Activated CD4-positive, alpha-beta memory T cell treated with anti-CD3 and anti-CD28 coated beads, Interleukin-2, amount 10 ng/mL, durations not matched to agents 7 days and 5 days (primary cell): ENCODE measurements at regions of chr2 and their contacts with region 1.

Region 1: GRCh38 chr2:231713730-231714430 is 5.6 kb downstream of the PTMA start:
- DNase-seq: peak; percentile 90
- H3K4me3 Mint-ChIP-seq: peak overlapping the region; percentile 17
- H3K27ac Mint-ChIP-seq: peak overlapping the region; percentile 94
- H3K4me1 Mint-ChIP-seq: peaks cover 28% of the 10 kb centered on the region
- H3K27me3 Mint-ChIP-seq: no peaks in the 10 kb centered on the region

Region 2: GRCh38 chr2:231198291-231199173 is 515.3 kb before region 1 on chr2 and contains the start of gene ARMC9:
- CTCF ChIA-PET with region 1: no interaction called
- POLR2A ChIA-PET with region 1: no interaction called
- DNase-seq: peak; percentile 78
- H3K4me3 Mint-ChIP-seq: peak within 1 kb of the TSS; percentile 88
- H3K27ac Mint-ChIP-seq: peak within 1 kb of the TSS; percentile 16
- H3K4me1 Mint-ChIP-seq: peaks cover 12% of the 10 kb centered on the region
- H3K27me3 Mint-ChIP-seq: peaks cover 30% of the 10 kb centered on the region
- total RNA-seq, gene ARMC9: 0.50 to 0.55 TPM

Region 3: DNA sequence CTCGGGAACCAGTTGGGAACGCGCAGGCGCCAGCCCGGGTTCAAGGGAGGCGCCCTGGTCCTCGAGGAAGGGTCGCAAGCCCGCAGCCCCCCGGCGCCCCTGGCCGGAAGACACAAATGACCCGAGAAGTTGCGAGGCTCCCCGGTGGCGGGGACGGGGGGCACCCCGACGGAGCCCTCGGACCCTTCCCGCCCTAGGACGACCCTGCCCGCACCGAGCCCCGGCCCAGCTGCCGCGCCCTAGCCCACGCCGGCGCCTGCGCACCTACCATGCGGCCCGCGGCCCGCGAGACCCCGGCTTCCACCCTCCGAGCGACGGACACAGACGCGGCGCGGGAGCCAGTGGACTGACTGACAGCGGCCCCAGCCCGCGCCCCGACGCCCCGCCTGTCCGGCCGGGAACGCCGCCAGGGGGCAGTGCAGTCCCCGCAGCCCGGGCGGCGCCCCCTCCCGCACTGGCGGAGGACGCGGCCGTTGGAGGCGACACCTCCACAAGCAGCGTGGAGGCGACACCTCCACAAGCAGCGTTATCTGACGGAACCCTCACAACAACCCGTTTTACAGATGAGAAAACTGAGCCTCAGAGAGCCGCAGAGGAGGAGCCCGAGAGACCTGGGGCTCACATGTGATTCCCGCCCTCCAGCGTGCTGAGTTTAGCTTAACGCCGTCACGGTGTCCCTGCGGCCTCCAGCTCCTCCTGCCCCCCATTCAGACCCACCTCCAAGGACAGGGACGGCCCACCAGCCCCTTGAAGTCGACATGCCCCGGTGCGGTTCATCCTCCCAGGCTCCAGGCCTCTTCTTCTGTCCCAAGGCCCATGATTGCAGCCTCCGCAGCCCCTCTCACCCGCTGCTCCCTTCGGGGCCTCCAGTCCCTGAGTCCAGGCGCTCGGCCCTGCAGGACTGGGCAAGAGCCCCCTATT is 183.5 kb before region 1 on chr2 and contains the start of gene NMUR1:
- CTCF ChIA-PET with region 1: no interaction called
- POLR2A ChIA-PET with region 1: no interaction called
- DNase-seq: peak; percentile 83
- H3K4me3 Mint-ChIP-seq: peak within 1 kb of the TSS; percentile 37
- H3K27ac Mint-ChIP-seq: no peak within 1 kb of the TSS
- H3K4me1 Mint-ChIP-seq: peaks cover 40% of the 10 kb centered on the region
- H3K27me3 Mint-ChIP-seq: peaks cover 46% of the 10 kb centered on the region
- total RNA-seq, gene NMUR1: 3.4 to 3.9 TPM

Region 4: GRCh38 chr2:231662028-231662810 is 51.7 kb before region 1 on chr2:
- CTCF ChIA-PET with region 1: interaction called, 15 read pairs
- POLR2A ChIA-PET with region 1: interaction called, 30 read pairs
- DNase-seq: peak; percentile 98
- H3K4me3 Mint-ChIP-seq: peak overlapping the region; percentile 73
- H3K27ac Mint-ChIP-seq: peak overlapping the region; percentile 90
- H3K4me1 Mint-ChIP-seq: peaks cover 31% of the 10 kb centered on the region
- H3K27me3 Mint-ChIP-seq: no peaks in the 10 kb centered on the region

Region 5: DNA sequence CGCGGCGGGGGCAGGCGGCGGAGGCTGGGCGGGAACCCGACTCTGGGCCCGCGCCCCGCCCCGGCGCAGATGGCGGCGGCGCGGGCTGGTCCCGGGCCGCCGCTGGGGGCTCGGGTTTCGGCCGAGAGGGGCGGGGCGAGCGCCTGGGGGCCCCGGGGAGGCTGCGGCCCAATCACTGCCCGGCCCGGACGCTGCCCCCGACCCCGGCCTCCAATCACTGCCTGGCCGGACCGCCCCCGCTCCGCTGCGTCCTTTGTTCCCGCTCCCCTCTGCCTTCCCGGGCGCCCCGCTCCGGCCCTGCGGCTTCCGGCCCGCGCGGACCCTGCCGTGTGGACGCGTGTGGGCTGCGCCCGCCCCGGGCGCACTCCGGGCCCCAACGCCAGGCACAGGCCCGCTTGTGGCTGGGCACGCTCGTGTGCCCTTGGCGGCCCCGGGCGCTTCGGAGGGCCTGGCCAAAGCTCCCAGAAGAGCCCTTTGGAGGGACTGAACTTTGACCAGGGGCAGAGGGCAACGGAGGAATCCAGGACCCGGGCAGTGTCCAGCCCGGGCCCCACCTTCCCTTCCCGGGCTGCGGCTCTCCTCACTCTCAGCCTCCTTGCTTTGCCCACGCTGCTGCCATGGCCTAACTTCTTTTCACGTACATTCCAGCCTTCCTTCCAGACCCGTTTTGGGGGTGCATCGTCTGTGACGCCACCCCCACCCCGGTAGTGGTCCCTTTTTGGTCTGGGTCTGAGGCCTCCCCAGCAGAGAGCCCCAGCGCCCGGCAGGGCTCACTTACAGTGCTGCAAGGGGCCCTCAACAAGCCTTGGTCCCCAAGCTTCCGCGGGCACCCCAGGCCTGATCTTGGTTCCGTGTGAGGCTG is 32.7 kb before region 1 on chr2:
- CTCF ChIA-PET with region 1: interaction called, 244 read pairs
- POLR2A ChIA-PET with region 1: interaction called, 141 read pairs
- DNase-seq: no peak
- H3K4me3 Mint-ChIP-seq: peak overlapping the region; percentile 27
- H3K27ac Mint-ChIP-seq: no peak overlapping the region
- H3K4me1 Mint-ChIP-seq: peaks cover 4% of the 10 kb centered on the region
- H3K27me3 Mint-ChIP-seq: peaks cover 16% of the 10 kb centered on the region

Region 6: GRCh38 chr2:231687133-231687852 is 26.6 kb before region 1 on chr2:
- CTCF ChIA-PET with region 1: interaction called, 55 read pairs
- POLR2A ChIA-PET with region 1: interaction called, 141 read pairs
- DNase-seq: peak; percentile 56
- H3K4me3 Mint-ChIP-seq: no peak overlapping the region
- H3K27ac Mint-ChIP-seq: no peak overlapping the region
- H3K4me1 Mint-ChIP-seq: peaks cover 1% of the 10 kb centered on the region
- H3K27me3 Mint-ChIP-seq: peaks cover 5% of the 10 kb centered on the region

Region 7: DNA sequence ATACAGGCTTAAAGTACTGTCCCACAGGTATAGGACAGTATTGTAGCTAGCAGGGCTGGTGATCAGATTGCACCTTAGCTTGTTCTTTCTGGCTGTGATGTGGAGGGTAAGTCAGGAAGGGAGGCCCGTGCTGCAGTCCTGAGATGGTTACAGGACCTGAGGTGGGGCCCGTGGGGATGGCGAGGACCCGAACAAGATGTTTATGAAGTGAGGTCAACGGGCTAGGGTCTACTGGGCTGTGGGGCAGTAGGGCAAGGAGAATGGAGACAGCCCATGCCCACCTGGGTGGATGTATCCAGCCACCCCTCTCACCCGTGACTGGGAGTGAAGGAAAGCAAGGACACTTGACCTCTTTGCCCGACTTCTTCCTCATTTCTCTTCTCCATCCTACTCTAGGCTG is 12.3 kb after region 1 on chr2:
- CTCF ChIA-PET with region 1: interaction called, 39 read pairs
- POLR2A ChIA-PET with region 1: interaction called, 6 read pairs
- DNase-seq: no peak
- H3K4me3 Mint-ChIP-seq: no peak overlapping the region
- H3K27ac Mint-ChIP-seq: no peak overlapping the region
- H3K4me1 Mint-ChIP-seq: no peaks in the 10 kb centered on the region
- H3K27me3 Mint-ChIP-seq: no peaks in the 10 kb centered on the region

Region 8: GRCh38 chr2:231745303-231746038 is 31.6 kb after region 1 on chr2:
- CTCF ChIA-PET with region 1: interaction called, 18 read pairs
- POLR2A ChIA-PET with region 1: no interaction called
- DNase-seq: no peak
- H3K4me3 Mint-ChIP-seq: no peak overlapping the region
- H3K27ac Mint-ChIP-seq: no peak overlapping the region
- H3K4me1 Mint-ChIP-seq: no peaks in the 10 kb centered on the region
- H3K27me3 Mint-ChIP-seq: no peaks in the 10 kb centered on the region

Region 9: GRCh38 chr2:231866450-231866849 is 152.6 kb after region 1 on chr2:
- CTCF ChIA-PET with region 1: no interaction called
- POLR2A ChIA-PET with region 1: no interaction called
- DNase-seq: no peak
- H3K4me3 Mint-ChIP-seq: no peak overlapping the region
- H3K27ac Mint-ChIP-seq: no peak overlapping the region
- H3K4me1 Mint-ChIP-seq: no peaks in the 10 kb centered on the region
- H3K27me3 Mint-ChIP-seq: peaks cover 14% of the 10 kb centered on the region

Region 10: DNA sequence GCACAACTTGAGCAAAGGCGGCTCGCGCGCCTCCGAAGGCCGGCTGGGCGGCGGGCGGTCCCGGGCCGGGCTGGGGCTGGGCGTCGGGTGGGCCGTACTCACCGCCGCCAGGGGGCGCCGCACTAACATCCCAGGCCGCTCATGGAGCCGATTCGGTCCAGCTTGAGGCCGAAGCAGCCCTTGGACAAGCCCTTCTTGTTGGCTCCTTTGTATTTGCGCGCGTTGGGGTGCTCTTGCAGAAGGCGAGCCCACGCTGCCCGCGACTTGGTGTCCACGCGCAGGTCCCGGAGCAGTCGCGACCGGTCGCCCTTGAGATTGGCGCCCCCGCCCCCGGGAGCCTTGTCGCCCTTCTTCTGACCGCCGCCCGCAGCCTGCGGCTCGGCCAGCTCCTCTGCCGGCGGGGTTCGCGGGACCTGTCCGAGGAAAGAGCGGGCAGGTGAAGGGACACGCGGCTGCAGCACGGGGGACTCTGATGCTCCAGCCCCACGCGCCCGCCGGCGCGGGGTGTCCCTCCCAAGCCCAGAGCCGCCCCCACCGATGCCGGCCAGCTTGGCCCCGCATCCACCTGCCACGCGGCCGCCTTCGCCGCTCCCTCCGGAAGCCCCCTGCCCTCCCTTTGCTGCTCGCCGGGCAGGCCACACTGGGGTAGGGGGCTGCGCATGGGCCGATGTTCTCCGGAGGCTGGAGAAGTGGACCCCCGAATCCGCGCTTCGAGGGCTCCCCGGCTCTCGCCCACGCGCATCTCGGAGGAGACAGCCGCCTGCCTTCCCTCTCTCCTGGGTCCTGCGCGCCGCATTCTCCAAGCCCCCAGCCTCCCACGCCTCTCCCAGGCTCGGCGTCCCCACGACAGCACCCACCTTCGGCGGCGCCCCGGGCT is 211.7 kb after region 1 on chr2:
- CTCF ChIA-PET with region 1: no interaction called
- POLR2A ChIA-PET with region 1: no interaction called
- DNase-seq: peak; percentile 70
- H3K4me3 Mint-ChIP-seq: peak overlapping the region; percentile 24
- H3K27ac Mint-ChIP-seq: no peak overlapping the region
- H3K4me1 Mint-ChIP-seq: peaks cover 12% of the 10 kb centered on the region
- H3K27me3 Mint-ChIP-seq: peaks cover 49% of the 10 kb centered on the region